Aorta (tissue), 5 donors: ENCODE measurements at regions of chr17 and their contacts with region 1.

Region 1: DNA sequence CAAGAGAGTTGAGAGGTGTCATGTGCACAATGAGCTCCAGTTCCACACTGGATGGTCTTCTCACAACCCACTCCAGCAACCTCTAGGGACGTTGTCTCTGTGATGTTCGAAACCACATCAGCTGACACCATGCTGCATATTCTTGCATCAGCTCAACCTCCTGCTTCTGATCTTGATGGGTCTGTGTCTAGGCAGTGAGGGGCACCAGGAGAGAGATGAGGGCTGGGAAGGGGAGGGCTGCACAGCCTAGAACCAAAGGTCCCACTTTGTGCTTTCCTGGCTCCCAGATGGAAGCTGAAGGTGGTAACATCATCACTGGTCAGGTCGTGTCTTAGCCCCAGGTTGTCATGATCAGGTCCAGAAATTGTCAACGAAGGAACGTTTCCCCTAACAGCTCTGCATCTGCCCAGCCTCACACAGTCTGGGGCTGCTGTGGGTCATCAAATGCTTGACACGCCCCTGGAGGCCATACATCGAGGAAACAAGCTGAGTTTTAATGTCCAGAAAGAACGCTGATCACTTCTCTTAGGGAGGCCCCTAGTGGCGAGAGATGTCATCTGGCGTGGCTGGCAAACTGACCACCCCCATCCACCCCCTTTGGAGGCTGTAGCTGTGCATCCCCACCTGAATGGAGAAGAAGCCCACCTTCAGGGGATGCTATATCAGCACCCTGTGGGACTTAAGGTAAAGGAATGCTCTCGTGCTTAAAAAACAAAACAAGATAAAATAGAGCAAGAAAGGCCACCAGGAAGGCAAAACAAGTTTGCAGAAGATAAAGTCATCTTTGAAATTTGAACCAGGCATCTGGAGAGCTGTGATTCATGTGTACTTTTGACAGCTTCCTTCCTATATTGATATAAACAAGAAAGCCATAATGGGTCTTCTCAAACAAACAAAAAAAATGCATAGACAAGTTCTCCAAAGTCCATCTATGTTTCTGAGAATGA is 58.3 kb downstream of the WIPI1 start:
- DNase-seq: peak in 1 of 2 donors; percentile 63
- ATAC-seq: peak; percentile 70
- H3K4me3 ChIP-seq: no peak overlapping the region
- H3K27ac ChIP-seq: no peak overlapping the region
- H3K4me1 ChIP-seq: peaks cover 0 to 3% of the 10 kb centered on the region in 2 donors
- H3K27me3 ChIP-seq: no peaks in the 10 kb centered on the region

Region 2: GRCh38 chr17:68288804-68289203 is 110.2 kb before region 1 on chr17:
- intact Hi-C with region 1: loop called in 1 of 2 experiments (anchors 10 kb)
- DNase-seq: no peak
- ATAC-seq: no peak
- H3K4me3 ChIP-seq: no peak overlapping the region
- H3K27ac ChIP-seq: no peak overlapping the region
- H3K4me1 ChIP-seq: no peaks in the 10 kb centered on the region
- H3K27me3 ChIP-seq: no peaks in the 10 kb centered on the region